Body of pancreas (tissue), 4 donors: ENCODE measurements at regions of chr22 and their contacts with region 1.

Region 1: GRCh38 chr22:41517172-41518047 is 26.9 kb downstream of the POLR3H start:
- DNase-seq: peak; percentile 73 to 84 (median 81)
- ATAC-seq: peak; percentile 78
- H3K4me3 ChIP-seq: no peak overlapping the region
- H3K27ac ChIP-seq: peak overlapping the region in 2 of 4 donors; percentile 35 to 43
- H3K4me1 ChIP-seq: peaks cover under 1% of the 10 kb centered on the region
- H3K27me3 ChIP-seq: no peaks in the 10 kb centered on the region
- CTCF ChIP-seq: peak; percentile 79 to 91 (median 87)
- POLR2A ChIP-seq: no peak

Region 2: DNA sequence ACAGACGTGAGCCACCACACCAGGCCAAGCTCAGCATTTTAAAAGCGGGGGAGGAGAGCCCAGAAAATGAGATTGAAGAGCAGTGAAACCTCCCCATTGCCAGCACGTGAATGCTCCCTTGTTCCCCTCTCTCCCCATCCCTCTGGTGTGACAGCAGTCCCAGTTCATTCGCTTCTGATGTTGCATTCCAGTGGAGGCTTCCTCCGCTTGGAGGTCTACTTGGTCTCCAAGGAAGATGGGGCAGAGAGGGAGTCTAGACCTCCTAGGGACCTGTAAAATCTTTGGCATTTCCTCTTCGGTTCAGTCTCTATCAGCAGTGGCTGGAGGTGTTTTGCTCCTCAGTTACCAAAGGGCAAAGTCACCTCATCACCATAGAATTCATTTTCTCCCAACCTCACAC is 455.3 kb before region 1 on chr22:
- intact Hi-C with region 1: no loop called
- DNase-seq: no peak
- ATAC-seq: no peak
- H3K4me3 ChIP-seq: no peak overlapping the region
- H3K27ac ChIP-seq: no peak overlapping the region
- H3K4me1 ChIP-seq: no peaks in the 10 kb centered on the region
- H3K27me3 ChIP-seq: no peaks in the 10 kb centered on the region
- CTCF ChIP-seq: no peak
- POLR2A ChIP-seq: no peak

Region 3: DNA sequence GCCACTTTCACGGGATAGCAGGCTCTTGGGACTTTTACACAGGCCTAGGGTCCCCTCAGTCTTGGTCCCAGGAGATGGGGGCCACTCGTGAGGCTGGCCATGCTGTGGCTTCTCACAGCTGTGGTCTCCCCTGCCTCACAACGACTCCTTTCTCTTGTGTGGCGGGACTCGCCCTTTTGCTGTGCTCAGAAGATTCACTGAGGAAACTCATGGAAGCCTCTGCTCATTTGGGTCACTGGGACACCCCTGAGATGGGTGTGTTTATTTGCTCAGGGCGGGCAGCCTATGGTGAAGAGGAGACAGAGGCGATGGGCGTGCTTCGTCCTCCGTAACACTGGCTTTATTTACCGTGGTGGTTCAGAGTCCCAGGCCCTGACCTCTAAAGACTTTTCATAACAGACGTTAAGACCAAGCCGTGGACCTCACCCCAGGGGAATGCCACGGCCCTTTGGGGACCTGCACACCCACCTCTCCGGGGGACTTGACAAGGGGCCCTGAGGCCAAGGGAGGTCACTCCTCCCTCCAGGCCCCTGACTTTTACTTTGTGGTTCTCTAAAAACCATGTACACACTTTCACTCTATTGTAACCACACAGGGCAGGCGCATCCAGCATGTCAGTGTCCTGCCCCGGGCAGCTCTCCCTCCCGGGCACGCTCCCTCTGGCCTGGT is 120.1 kb before region 1 on chr22:
- intact Hi-C with region 1: loop called (anchors 5 kb)
- DNase-seq: no peak
- ATAC-seq: no peak
- H3K4me3 ChIP-seq: no peak overlapping the region
- H3K27ac ChIP-seq: no peak overlapping the region
- H3K4me1 ChIP-seq: peaks cover 13% of the 10 kb centered on the region
- H3K27me3 ChIP-seq: no peaks in the 10 kb centered on the region
- CTCF ChIP-seq: no peak
- POLR2A ChIP-seq: no peak

Region 4: GRCh38 chr22:41458161-41458728 is 59.2 kb before region 1 on chr22:
- intact Hi-C with region 1: loop called (anchors 10 kb)
- DNase-seq: no peak
- ATAC-seq: no peak
- H3K4me3 ChIP-seq: no peak overlapping the region
- H3K27ac ChIP-seq: no peak overlapping the region
- H3K4me1 ChIP-seq: no peaks in the 10 kb centered on the region
- H3K27me3 ChIP-seq: no peaks in the 10 kb centered on the region
- CTCF ChIP-seq: no peak
- POLR2A ChIP-seq: no peak